ENCODE measurements at regions of chr2 and their contacts with region 1.

Region 1: GRCh38 chr2:45765728-45766254 is 114.3 kb downstream of the PRKCE start:
- DNase-seq: no peak
- H3K4me3 ChIP-seq: no peak overlapping the region
- CTCF ChIP-seq: no peak

Region 2: GRCh38 chr2:45688479-45689200 is 77.2 kb before region 1 on chr2:
- in situ Hi-C with region 1: loop called (anchors 5 kb)
- DNase-seq: peak; percentile 22
- H3K4me3 ChIP-seq: no peak overlapping the region
- CTCF ChIP-seq: no peak

Region 3: DNA sequence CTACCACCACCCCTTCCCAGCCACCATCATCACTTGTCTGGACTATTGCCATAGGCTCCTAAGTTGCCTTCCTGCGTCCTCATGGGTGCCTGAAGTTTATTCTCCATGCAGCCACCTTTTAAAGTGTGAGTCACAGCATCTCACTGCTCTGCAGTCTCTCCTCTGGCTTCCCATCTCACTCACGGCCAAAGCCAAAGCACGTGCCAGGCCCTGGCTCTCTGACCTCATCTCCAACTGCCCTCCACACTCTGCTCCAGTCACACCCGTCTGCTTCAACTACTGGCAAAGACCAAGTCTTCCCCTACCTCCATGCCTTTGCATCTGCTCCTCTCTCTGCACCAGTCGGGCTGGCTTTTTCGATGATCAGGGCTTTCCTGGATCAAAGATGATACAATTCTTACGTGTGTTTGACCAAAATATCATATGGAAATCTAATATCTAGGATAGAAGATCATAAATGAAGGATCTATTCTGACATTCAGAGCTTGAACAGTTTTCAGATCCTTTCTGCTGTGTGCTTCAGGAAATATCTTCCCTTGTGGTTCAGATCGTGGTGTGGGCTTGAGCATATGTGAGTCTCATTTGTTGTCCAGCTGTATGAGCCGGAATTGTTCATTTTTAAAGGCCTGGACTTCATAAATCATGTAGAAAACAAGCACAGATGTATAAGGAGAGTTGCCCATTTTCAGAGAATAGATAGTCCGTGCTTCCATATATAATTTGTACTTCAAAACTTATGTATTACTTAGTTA is 61.3 kb after region 1 on chr2:
- in situ Hi-C with region 1: loop called (anchors 5 kb)
- DNase-seq: no peak
- H3K4me3 ChIP-seq: no peak overlapping the region
- CTCF ChIP-seq: no peak

Measured in astrocyte of the cerebellum (primary cell).